HepG2 (cell line): ENCODE measurements at regions of chr6 and their contacts with region 1.

Region 1: GRCh38 chr6:151765444-151765886 is 42.0 kb upstream of the ESR1 start:
- DNase-seq: peak; percentile 79
- ATAC-seq: peak; percentile 58
- H3K4me3 ChIP-seq: no peak overlapping the region
- H3K27ac ChIP-seq: no peak overlapping the region
- H3K4me1 ChIP-seq: no peaks in the 10 kb centered on the region
- H3K27me3 ChIP-seq: no peaks in the 10 kb centered on the region; a peak in 1 of 5 replicates
- CTCF ChIP-seq: peak; percentile 75
- EP300 ChIP-seq: no peak
- POLR2A ChIP-seq: no peak
- RAD21 ChIP-seq: 0 out of 2 replicates have a peak, but pooled peaks have one; percentile 23

Region 2: GRCh38 chr6:151656392-151656791 is 109.1 kb before region 1 on chr6:
- CTCF ChIA-PET with region 1: no interaction called
- POLR2A ChIA-PET with region 1: no interaction called
- in situ Hi-C with region 1: no loop called
- intact Hi-C with region 1: no loop called
- DNase-seq: no peak
- ATAC-seq: no peak
- H3K4me3 ChIP-seq: no peak overlapping the region
- H3K27ac ChIP-seq: no peak overlapping the region
- H3K4me1 ChIP-seq: peaks cover 38% of the 10 kb centered on the region
- H3K27me3 ChIP-seq: no peaks in the 10 kb centered on the region
- CTCF ChIP-seq: no peak
- EP300 ChIP-seq: no peak
- POLR2A ChIP-seq: no peak
- RAD21 ChIP-seq: no peak

Region 3: DNA sequence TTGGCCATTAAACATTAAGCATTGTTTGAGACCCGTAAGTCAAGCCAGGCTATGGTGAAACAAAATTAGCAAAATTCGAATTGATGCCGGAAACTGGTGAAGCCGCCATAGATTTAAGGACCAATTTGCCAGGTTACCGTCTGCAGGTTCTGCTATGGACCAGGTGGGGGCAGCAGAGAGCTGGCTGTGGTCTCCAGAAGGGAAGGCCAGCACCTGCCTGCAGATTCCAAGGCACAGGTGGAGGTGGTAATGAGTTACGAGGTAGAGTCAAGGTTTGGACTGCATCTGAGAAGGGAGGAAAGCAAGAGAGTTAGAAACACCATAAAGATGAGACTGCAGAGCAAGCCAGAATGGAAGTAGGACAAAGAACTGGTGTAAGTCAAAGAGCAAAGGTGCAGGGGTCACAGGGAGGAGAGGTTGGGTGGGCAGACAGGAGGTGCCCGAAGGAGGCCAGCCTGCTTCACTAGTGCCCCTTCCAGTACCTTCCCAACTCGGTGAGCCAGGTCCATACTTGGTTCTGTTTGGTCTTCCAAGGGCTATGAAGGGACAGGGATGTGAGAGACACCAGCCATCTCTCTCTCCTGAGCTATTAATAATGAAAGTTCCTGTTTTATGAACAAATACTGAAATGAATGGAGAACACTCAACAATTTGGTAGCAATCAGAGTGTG is 89.6 kb before region 1 on chr6:
- CTCF ChIA-PET with region 1: no interaction called
- POLR2A ChIA-PET with region 1: no interaction called
- in situ Hi-C with region 1: no loop called
- intact Hi-C with region 1: loop called (anchors 1 kb)
- DNase-seq: peak; percentile 64
- ATAC-seq: peak; percentile 93
- H3K4me3 ChIP-seq: no peak overlapping the region
- H3K27ac ChIP-seq: no peak overlapping the region
- H3K4me1 ChIP-seq: peaks cover 26% of the 10 kb centered on the region
- H3K27me3 ChIP-seq: no peaks in the 10 kb centered on the region; a peak in 1 of 5 replicates
- CTCF ChIP-seq: peak; percentile 98
- EP300 ChIP-seq: no peak
- POLR2A ChIP-seq: no peak
- RAD21 ChIP-seq: peak; percentile 95

Region 4: GRCh38 chr6:151733680-151734320 is 31.7 kb before region 1 on chr6:
- CTCF ChIA-PET with region 1: no interaction called
- POLR2A ChIA-PET with region 1: no interaction called
- in situ Hi-C with region 1: no loop called
- intact Hi-C with region 1: loop called (anchors 2 kb)
- DNase-seq: no peak
- ATAC-seq: no peak
- H3K4me3 ChIP-seq: no peak overlapping the region
- H3K27ac ChIP-seq: no peak overlapping the region
- H3K4me1 ChIP-seq: no peaks in the 10 kb centered on the region
- H3K27me3 ChIP-seq: no peaks in the 10 kb centered on the region
- CTCF ChIP-seq: no peak
- EP300 ChIP-seq: no peak
- POLR2A ChIP-seq: no peak
- RAD21 ChIP-seq: no peak

Region 5: DNA sequence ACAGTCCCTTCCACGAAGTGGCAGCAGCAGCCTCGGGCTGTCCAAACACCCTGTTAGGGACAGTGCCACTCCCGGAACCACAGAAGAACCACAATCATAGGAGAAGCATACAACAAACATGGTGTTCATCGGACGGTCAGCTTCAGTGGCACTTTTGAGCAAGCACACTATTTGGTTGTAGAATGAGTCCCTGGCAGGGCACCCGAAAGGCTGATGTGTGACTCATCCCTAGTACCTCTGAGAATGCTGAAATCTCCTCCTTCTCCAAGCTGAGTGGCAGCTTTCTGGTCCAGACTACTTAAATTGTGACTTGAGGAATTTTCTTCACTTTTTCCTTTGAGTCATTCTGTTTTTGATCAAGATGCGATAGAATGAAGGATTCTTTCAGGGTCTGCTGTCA is 324.5 kb after region 1 on chr6:
- CTCF ChIA-PET with region 1: no interaction called
- POLR2A ChIA-PET with region 1: no interaction called
- in situ Hi-C with region 1: no loop called
- intact Hi-C with region 1: loop called (anchors 10 kb)
- DNase-seq: no peak
- ATAC-seq: no peak
- H3K4me3 ChIP-seq: no peak overlapping the region
- H3K27ac ChIP-seq: no peak overlapping the region
- H3K4me1 ChIP-seq: no peaks in the 10 kb centered on the region
- H3K27me3 ChIP-seq: peaks cover 0 to 6% of the 10 kb centered on the region in 2 experiments; a peak in 4 of 5 replicates
- CTCF ChIP-seq: no peak
- EP300 ChIP-seq: no peak
- POLR2A ChIP-seq: no peak
- RAD21 ChIP-seq: no peak

Region 6: DNA sequence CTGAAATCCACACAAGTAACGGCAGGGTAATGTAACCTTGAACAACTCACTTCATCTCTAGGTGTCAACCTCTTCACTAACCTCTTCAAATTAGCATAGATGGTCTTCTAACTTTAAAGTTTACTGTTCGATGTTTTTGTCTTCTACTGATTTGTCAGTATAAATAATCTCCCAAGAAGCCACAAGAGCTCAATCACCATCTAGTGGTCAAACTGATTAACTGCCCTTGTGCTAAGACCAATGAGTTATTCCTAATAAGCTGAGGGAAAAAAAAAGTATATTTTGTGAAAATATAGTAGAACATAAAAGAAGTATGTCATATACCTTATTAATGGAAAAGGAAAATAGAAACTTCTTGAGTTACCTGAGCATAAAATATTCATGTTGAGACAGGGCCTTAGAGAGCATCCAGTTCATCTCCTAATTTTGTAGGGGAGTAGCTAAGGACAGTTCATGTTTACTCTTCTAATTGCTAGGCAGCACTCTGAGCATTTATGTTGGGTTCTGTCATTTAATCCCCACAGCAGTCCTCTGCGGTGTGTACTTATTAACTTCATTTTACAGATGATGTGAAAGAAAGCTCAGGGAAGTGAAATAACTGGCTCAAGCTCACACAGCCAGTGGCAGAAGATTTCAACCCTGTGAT is 359.1 kb after region 1 on chr6:
- CTCF ChIA-PET with region 1: interaction called, 15 read pairs
- POLR2A ChIA-PET with region 1: no interaction called
- in situ Hi-C with region 1: loop called (anchors 5 kb)
- intact Hi-C with region 1: loop called (anchors 1 kb)
- DNase-seq: peak; percentile 54
- ATAC-seq: peak; percentile 84
- H3K4me3 ChIP-seq: no peak overlapping the region
- H3K27ac ChIP-seq: no peak overlapping the region
- H3K4me1 ChIP-seq: no peaks in the 10 kb centered on the region
- H3K27me3 ChIP-seq: no peaks in the 10 kb centered on the region
- CTCF ChIP-seq: peak; percentile 70
- EP300 ChIP-seq: no peak
- POLR2A ChIP-seq: no peak
- RAD21 ChIP-seq: peak; percentile 62

Region 7: GRCh38 chr6:152189736-152190135 is 424.3 kb after region 1 on chr6:
- CTCF ChIA-PET with region 1: no interaction called
- POLR2A ChIA-PET with region 1: no interaction called
- in situ Hi-C with region 1: no loop called
- intact Hi-C with region 1: no loop called
- DNase-seq: no peak
- ATAC-seq: no peak
- H3K4me3 ChIP-seq: no peak overlapping the region
- H3K27ac ChIP-seq: no peak overlapping the region
- H3K4me1 ChIP-seq: no peaks in the 10 kb centered on the region
- H3K27me3 ChIP-seq: no peaks in the 10 kb centered on the region
- CTCF ChIP-seq: no peak
- EP300 ChIP-seq: no peak
- POLR2A ChIP-seq: no peak
- RAD21 ChIP-seq: no peak

Region 8: GRCh38 chr6:152356451-152357061 is 591.1 kb after region 1 on chr6:
- CTCF ChIA-PET with region 1: no interaction called
- POLR2A ChIA-PET with region 1: no interaction called
- in situ Hi-C with region 1: no loop called
- intact Hi-C with region 1: loop called (anchors 1 kb)
- DNase-seq: peak; percentile 63
- ATAC-seq: peak; percentile 96
- H3K4me3 ChIP-seq: no peak overlapping the region
- H3K27ac ChIP-seq: no peak overlapping the region
- H3K4me1 ChIP-seq: no peaks in the 10 kb centered on the region
- H3K27me3 ChIP-seq: no peaks in the 10 kb centered on the region
- CTCF ChIP-seq: peak; percentile 82
- EP300 ChIP-seq: no peak
- POLR2A ChIP-seq: no peak
- RAD21 ChIP-seq: peak; percentile 76; the same call in 1 of the 2 replicates